ENCODE measurements at regions of chr3 and their contacts with region 1.

Region 1: GRCh38 chr3:13166243-13167063 is 93.2 kb upstream of the IQSEC1 start:
- DNase-seq: no peak
- H3K4me3 ChIP-seq: no peak overlapping the region
- H3K27ac ChIP-seq: no peak overlapping the region
- H3K4me1 ChIP-seq: peaks cover 5 to 16% (median 12%) of the 10 kb centered on the region in 4 experiments
- H3K27me3 ChIP-seq: no peaks in the 10 kb centered on the region
- CTCF ChIP-seq: no peak
- EP300 ChIP-seq: no peak
- POLR2A ChIP-seq: no peak
- RAD21 ChIP-seq: no peak

Region 2: DNA sequence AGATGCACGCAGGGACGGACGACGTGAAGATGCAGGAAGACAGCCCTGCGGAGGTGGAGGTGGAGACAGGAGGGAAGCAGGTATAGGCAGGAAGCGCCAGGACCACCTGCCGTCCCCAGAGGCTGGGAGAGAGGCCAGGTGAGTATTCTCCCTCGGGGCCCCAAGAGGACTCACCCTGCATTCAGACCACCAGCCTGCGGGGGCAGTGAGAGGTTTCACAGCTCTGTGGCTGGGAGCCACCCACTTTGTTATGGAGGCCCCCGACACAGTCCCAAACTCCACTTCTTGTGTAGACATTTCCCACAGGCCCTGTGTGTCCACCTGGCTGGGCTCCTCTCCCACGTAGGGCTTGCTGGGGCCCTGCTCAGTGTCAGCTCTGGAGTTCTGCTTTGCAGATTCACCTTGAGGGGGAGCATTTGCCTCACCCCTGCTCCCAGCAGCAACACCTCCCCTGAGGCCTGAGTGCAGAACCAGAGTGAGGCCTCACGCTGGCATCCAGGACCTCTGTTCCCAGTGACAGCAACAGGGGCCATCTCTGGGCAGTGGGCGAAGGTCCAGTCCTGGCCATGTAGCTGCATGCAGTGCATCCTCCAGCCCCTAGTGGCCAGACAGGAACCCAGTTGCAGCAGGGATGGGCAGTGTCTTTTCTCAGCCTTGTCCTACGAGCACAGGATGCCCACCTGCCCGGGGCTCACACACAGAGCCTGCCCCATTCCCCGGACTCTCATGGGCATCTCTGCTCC is 26.2 kb after region 1 on chr3:
- CTCF ChIA-PET with region 1: interaction called, 10 read pairs
- POLR2A ChIA-PET with region 1: no interaction called
- DNase-seq: no peak
- H3K4me3 ChIP-seq: no peak overlapping the region
- H3K27ac ChIP-seq: no peak overlapping the region
- H3K4me1 ChIP-seq: peaks cover 0 to 7% (median 2%) of the 10 kb centered on the region in 4 experiments; a peak in 4 of 7 replicates
- H3K27me3 ChIP-seq: no peaks in the 10 kb centered on the region
- CTCF ChIP-seq: peak in 2 of 3 experiments; percentile 56 to 84; a peak in 3 of 4 replicates
- EP300 ChIP-seq: no peak
- POLR2A ChIP-seq: no peak
- RAD21 ChIP-seq: peak in 1 of 2 experiments; percentile 44; a peak in 2 of 4 replicates

Measured in H1 (cell line).